ENCODE measurements at regions of chr18 and their contacts with region 1.

Region 1: DNA sequence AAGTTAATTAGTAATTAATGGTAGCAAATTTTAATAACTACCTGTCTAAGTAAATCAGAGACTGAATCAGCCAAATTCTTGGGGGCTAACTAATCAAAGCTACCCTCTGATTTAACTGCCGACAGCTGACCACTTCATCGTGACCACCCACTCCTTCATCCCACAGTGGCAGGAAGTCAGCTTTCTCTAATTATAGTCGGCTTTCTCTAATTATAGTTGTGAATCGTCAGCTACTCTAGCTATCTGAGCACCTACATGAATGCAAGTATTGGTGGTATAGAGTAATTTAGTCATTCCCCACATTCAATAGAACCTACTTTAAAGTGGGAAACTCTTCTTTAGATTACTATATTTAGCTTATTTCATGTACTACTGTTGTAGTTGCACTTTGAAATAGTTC is 185.5 kb downstream of the PTGR3 start:
- DNase-seq: no peak
- ATAC-seq: no peak
- H3K4me3 ChIP-seq: no peak overlapping the region
- H3K27ac ChIP-seq: no peak overlapping the region
- H3K4me1 ChIP-seq: no peaks in the 10 kb centered on the region
- H3K27me3 ChIP-seq: no peaks in the 10 kb centered on the region
- CTCF ChIP-seq: no peak
- POLR2A ChIP-seq: no peak
- RAD21 ChIP-seq: no peak

Region 2: DNA sequence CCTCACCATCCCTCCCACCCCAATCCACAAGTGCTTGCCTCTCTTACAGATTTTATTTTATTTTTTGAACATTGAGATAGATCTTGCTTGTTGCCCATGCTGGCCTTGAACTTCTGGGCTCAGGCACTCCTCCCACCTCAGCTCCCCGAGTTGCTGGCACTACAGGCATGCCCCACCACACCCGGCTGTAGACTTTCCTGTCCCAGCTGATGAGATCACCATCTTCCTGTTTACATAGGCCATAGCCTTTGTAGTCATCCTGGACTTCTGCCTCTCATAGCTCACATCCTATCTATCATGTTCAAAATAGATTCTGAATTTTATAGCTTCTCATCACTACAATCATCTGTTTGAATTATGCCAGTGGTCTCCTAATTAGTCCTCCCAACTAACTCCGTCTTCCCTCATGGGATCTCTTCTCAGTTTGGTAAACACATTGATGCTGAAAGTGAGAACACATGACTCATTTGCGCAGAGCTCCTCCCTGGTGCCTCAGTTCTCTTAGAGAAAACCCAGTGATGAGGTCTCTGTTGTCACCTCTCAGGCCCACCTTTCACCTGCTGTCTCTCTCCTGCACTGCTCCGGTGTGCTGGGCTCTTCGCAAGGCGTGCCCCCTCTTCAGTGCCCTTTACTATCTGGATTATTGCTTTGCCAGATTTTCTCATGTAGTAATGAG is 182.8 kb before region 1 on chr18:
- CTCF ChIA-PET with region 1: no interaction called
- POLR2A ChIA-PET with region 1: no interaction called
- dilution Hi-C with region 1: no loop called
- in situ Hi-C with region 1: no loop called
- intact Hi-C with region 1: loop called (anchors 10 kb)
- DNase-seq: peak; percentile 82
- ATAC-seq: peak; percentile 60
- H3K4me3 ChIP-seq: no peak overlapping the region
- H3K27ac ChIP-seq: no peak overlapping the region
- H3K4me1 ChIP-seq: peaks cover 12% of the 10 kb centered on the region
- H3K27me3 ChIP-seq: no peaks in the 10 kb centered on the region
- CTCF ChIP-seq: no peak
- POLR2A ChIP-seq: no peak
- RAD21 ChIP-seq: no peak

Region 3: DNA sequence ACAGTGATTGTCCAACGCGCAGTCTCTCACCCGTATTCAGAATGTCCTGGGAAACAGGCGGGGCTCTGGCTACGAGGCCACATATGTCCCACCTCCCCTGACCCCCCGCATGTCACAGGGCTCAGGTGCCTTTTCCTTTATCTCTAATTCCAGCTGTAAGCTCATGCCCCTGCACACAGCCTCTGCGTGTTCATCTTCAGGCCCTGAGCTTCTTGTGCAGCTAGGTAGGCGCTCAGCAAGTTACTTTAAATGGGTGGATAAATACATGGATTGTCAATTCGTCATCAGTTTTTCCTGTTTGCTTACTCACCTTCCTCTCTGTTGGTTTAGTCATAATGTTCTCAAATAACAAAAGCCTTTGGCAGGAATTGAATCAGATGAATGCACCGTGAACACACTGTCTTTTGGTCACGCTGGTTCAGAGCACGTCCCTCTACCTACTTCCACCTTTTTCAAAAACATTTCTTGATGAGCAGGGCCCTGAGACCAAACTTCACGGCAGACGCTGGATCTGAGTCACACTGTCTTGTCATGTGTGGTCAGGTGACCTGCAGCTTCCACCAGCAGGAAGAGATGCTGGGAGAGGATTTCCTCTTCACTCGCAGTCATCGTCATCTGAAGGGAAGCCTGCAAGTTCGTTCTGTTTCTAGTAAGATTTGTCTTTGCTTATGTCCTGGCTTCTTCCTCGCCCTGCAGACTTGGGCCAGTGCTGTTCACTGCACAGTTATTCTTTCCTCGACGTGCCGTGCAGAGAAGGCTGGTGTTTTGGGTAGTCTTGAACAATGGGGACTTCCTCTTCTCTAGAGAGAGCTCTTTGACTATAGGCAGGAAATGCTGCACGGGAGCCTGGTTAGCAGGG is 47.4 kb after region 1 on chr18:
- CTCF ChIA-PET with region 1: no interaction called
- POLR2A ChIA-PET with region 1: no interaction called
- dilution Hi-C with region 1: no loop called
- in situ Hi-C with region 1: no loop called
- intact Hi-C with region 1: no loop called
- DNase-seq: peak; percentile 90
- ATAC-seq: peak; percentile 67
- H3K4me3 ChIP-seq: no peak overlapping the region
- H3K27ac ChIP-seq: peak overlapping the region; percentile 28; the same call in 1 of the 2 replicates
- H3K4me1 ChIP-seq: peaks cover 8% of the 10 kb centered on the region
- H3K27me3 ChIP-seq: no peaks in the 10 kb centered on the region
- CTCF ChIP-seq: no peak
- POLR2A ChIP-seq: no peak
- RAD21 ChIP-seq: no peak